ENCODE measurements at regions of chr6 and their contacts with region 1.

Region 1: GRCh38 chr6:147202516-147203312 is 1.5 kb upstream of the STXBP5 start:
- DNase-seq: peak; percentile 87 to 88
- H3K4me3 ChIP-seq: peak overlapping the region; percentile 69
- H3K4me3 Mint-ChIP-seq: peak overlapping the region; percentile 98
- H3K27ac Mint-ChIP-seq: peak overlapping the region; percentile 92
- H3K4me1 ChIP-seq: peaks cover 11% of the 10 kb centered on the region; the same call in 1 of the 2 replicates
- H3K4me1 Mint-ChIP-seq: peaks cover 14% of the 10 kb centered on the region
- H3K27me3 ChIP-seq: no peaks in the 10 kb centered on the region
- H3K27me3 Mint-ChIP-seq: no peaks in the 10 kb centered on the region
- CTCF ChIP-seq: no peak

Region 2: DNA sequence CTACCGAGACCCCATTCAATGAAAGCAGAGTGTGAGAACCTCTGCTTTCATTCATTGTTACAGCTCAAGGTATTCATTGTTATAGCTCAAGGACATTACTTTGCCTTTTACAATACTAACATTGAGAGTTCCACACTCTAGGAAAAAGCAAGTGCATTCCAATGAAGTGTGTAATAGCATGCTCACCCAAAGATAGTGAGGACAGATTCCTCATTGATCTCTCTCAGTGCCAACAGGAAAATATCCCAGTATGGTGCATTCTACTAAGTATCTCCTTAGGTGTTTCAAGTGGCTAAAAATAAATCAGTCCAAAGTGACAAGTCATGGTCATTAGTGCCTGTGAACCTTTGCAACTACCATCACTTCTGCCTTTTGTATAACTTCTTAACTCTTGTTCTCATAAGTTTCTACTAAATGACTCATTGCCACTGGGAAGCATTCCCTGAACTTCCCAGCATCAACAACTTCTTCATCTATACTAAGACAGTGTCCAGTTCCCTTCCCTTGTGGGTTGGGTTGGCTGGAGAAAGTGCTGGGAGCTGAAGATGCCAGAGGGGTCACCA is 139.2 kb before region 1 on chr6:
- CTCF ChIA-PET with region 1: no interaction called
- POLR2A ChIA-PET with region 1: no interaction called
- intact Hi-C with region 1: loop called (anchors 5 kb)
- DNase-seq: no peak
- H3K4me3 ChIP-seq: no peak overlapping the region
- H3K4me3 Mint-ChIP-seq: no peak overlapping the region
- H3K27ac Mint-ChIP-seq: no peak overlapping the region
- H3K4me1 ChIP-seq: 0 out of 2 replicates have a peak, but pooled peaks cover 7% of the 10 kb centered on the region
- H3K4me1 Mint-ChIP-seq: peaks cover 5% of the 10 kb centered on the region
- H3K27me3 ChIP-seq: no peaks in the 10 kb centered on the region
- H3K27me3 Mint-ChIP-seq: no peaks in the 10 kb centered on the region
- CTCF ChIP-seq: no peak

Region 3: DNA sequence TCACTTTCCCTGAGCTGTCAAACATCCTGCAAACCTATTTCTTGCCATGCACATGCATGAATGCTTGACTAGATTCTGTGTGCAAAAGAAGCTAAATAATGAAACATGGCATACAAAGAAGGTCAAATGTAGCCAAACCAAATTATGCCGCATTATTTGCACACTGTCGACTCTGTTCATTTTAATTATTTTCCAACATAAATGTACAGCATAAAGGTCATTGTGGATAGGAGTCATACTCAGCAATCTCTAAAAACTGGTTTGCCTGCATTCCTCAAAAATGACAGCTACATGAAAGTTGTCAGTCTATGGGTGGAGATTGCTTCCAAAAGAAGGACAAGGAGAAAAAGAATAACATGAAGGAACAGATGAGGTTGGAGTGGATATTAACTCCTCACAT is 121.6 kb before region 1 on chr6:
- CTCF ChIA-PET with region 1: no interaction called
- POLR2A ChIA-PET with region 1: no interaction called
- intact Hi-C with region 1: loop called (anchors 5 kb)
- DNase-seq: peak; percentile 46 to 71
- H3K4me3 ChIP-seq: no peak overlapping the region
- H3K4me3 Mint-ChIP-seq: peak overlapping the region; percentile 66
- H3K27ac Mint-ChIP-seq: peak overlapping the region; percentile 61
- H3K4me1 ChIP-seq: peaks cover 32% of the 10 kb centered on the region
- H3K4me1 Mint-ChIP-seq: peaks cover 6% of the 10 kb centered on the region
- H3K27me3 ChIP-seq: no peaks in the 10 kb centered on the region
- H3K27me3 Mint-ChIP-seq: no peaks in the 10 kb centered on the region
- CTCF ChIP-seq: no peak

Measured in Caco-2 (cell line).